ENCODE measurements at regions of chr7 and their contacts with region 1.

Region 1: GRCh38 chr7:113321201-113321600 is 202.8 kb upstream of the SMIM30 start:
- DNase-seq: no peak
- ATAC-seq: no peak
- H3K4me3 ChIP-seq: no peak overlapping the region
- H3K27ac ChIP-seq: no peak overlapping the region
- H3K4me1 ChIP-seq: no peaks in the 10 kb centered on the region
- H3K27me3 ChIP-seq: no peaks in the 10 kb centered on the region
- CTCF ChIP-seq: no peak

Region 2: GRCh38 chr7:113338071-113338696 is 17.0 kb after region 1 on chr7:
- intact Hi-C with region 1: loop called in 1 of 10 experiments (anchors 1 kb)
- DNase-seq: no peak
- ATAC-seq: no peak
- H3K4me3 ChIP-seq: no peak overlapping the region
- H3K27ac ChIP-seq: no peak overlapping the region
- H3K4me1 ChIP-seq: no peaks in the 10 kb centered on the region
- H3K27me3 ChIP-seq: no peaks in the 10 kb centered on the region
- CTCF ChIP-seq: no peak

Region 3: DNA sequence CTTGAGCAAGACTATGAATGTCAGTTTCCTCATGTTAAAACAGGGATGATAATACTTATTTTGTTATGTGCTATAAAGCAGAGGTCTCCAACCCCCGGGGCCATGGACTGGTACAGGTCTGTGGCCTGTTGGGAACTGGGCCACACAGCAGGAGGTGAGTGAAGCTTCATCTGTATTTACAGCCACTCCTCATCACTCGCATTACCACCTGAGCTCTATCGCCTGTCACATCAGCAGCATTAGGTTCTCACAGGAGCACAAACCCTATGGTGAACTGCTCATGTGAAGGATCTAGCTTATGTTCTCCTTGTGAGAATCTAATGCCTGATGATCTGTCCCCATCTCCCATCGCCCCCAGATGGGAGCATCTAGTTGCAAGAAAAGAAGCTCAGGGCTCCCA is 162.5 kb after region 1 on chr7:
- intact Hi-C with region 1: no loop called
- DNase-seq: no peak
- ATAC-seq: no peak
- H3K4me3 ChIP-seq: no peak overlapping the region
- H3K27ac ChIP-seq: no peak overlapping the region
- H3K4me1 ChIP-seq: no peaks in the 10 kb centered on the region
- H3K27me3 ChIP-seq: no peaks in the 10 kb centered on the region
- CTCF ChIP-seq: no peak